BJ (cell line): ENCODE measurements at regions of chr17 and their contacts with region 1.

Region 1: GRCh38 chr17:60827943-60828342 is 150.3 kb downstream of the BCAS3 start:
- DNase-seq: peak; percentile 19
- H3K4me3 ChIP-seq: no peak overlapping the region
- H3K27me3 ChIP-seq: no peaks in the 10 kb centered on the region
- CTCF ChIP-seq: no peak

Region 2: GRCh38 chr17:60792250-60792898 is 35.6 kb before region 1 on chr17:
- CTCF ChIA-PET with region 1: no interaction called
- POLR2A ChIA-PET with region 1: interaction called, 12 read pairs
- DNase-seq: no peak
- H3K4me3 ChIP-seq: no peak overlapping the region
- H3K27me3 ChIP-seq: no peaks in the 10 kb centered on the region
- CTCF ChIP-seq: no peak